ENCODE measurements at regions of chr11 and their contacts with region 1.

Region 1: DNA sequence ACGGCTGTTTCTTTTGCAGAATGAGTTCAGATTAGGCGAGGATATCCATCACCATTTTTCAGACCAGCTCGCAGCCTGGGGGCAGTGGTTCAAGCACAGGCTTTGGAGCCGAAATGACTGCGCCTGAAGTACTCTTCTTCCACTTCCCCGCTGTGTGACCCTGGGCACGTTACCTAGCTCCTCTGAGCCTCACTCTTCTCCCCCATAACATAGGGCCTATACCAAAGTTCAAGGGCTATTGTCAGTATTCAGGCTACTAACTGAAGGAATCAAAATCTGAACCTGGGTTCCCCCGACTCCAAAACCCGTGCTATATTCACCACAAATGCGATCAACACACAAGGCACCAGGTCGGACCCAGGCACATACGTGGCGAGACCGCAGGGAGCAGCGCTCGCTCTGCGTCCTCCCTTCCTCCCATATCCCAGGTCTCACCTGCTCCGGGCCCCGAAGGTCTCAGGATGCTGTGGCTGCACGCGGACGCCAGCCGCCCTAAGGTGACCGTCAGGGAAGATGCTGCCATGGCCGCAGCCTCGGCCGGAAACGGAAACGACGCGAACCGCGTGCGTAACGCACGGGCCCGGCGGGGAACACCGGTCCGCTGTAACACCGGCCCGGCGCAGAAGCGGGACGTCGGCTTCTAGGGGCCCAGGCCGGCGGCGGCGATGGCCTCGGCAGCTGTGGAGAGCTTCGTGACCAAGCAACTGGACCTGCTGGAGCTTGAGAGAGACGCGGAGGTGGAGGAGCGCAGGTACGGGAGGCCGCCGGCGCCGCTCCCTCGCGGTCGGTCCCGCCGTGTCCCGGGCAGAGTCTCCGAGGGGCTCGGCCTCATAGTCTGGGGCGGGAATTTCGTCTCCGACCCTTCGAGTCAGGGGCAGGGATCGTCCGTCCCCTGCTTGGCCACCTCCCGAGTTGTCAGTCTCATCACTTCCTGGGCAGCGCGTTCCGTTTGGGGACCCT is at the starts of genes IGHMBP2 and MRPL21:
- DNase-seq: peak; percentile 80
- ATAC-seq: peak; percentile 96
- H3K4me3 ChIP-seq: peak within 1 kb of the TSS; percentile 97
- H3K27ac ChIP-seq: peak within 1 kb of the TSS; percentile 91
- H3K4me1 ChIP-seq: peaks cover 3% of the 10 kb centered on the region; the same call in 1 of the 2 replicates
- H3K27me3 ChIP-seq: no peaks in the 10 kb centered on the region
- CTCF ChIP-seq: no peak
- POLR2A ChIP-seq: peak; percentile 71
- RAD21 ChIP-seq: peak; percentile 28; the same call in 1 of the 2 replicates
- total RNA-seq, gene IGHMBP2: 3.9 and 4.5 TPM in 2 replicates
- total RNA-seq, gene MRPL21: 19.2 and 21.7 TPM in 2 replicates

Region 2: DNA sequence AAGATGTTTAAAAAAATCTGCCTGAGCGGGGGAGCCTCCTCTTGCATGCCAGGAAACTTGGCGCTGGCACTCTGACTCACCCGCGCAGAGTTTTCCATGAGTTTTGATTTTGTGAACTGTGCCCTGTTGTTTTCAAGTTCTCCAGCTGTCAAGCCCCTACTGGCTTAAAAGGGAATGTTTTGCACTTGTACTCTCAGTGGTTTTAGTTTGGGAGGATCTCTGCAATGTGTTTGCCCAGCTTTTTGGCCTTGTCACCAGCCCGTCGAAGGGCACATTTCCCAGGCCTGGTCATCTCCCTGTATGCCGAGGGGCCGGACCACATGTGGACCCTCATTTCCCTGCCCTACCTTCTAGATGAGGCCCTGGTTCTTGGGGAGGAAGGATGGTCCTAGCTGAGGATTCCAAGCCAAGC is 97.3 kb after region 1 on chr11:
- CTCF ChIA-PET with region 1: no interaction called
- POLR2A ChIA-PET with region 1: no interaction called
- dilution Hi-C with region 1: no loop called
- in situ Hi-C with region 1: no loop called
- intact Hi-C with region 1: loop called (anchors 5 kb)
- DNase-seq: peak; percentile 87
- ATAC-seq: peak; percentile 73
- H3K4me3 ChIP-seq: no peak overlapping the region
- H3K27ac ChIP-seq: peak overlapping the region; percentile 53; the same call in 1 of the 2 replicates
- H3K4me1 ChIP-seq: peaks cover 26% of the 10 kb centered on the region
- H3K27me3 ChIP-seq: no peaks in the 10 kb centered on the region
- CTCF ChIP-seq: peak; percentile 66
- POLR2A ChIP-seq: no peak
- RAD21 ChIP-seq: peak; percentile 62

Region 3: GRCh38 chr11:69048718-69049489 is 145.3 kb after region 1 on chr11 and contains the start of gene TPCN2:
- CTCF ChIA-PET with region 1: interaction called, 3 read pairs
- POLR2A ChIA-PET with region 1: no interaction called
- dilution Hi-C with region 1: no loop called
- in situ Hi-C with region 1: no loop called
- intact Hi-C with region 1: loop called (anchors 1 kb)
- DNase-seq: peak; percentile 96
- ATAC-seq: peak; percentile 96
- H3K4me3 ChIP-seq: peak within 1 kb of the TSS; percentile 60
- H3K27ac ChIP-seq: peak within 1 kb of the TSS; percentile 53
- H3K4me1 ChIP-seq: peaks cover 13% of the 10 kb centered on the region
- H3K27me3 ChIP-seq: no peaks in the 10 kb centered on the region
- CTCF ChIP-seq: no peak
- POLR2A ChIP-seq: peak; percentile 80
- RAD21 ChIP-seq: no peak
- total RNA-seq, gene TPCN2: 3.1 and 3.4 TPM in 2 replicates

Region 4: DNA sequence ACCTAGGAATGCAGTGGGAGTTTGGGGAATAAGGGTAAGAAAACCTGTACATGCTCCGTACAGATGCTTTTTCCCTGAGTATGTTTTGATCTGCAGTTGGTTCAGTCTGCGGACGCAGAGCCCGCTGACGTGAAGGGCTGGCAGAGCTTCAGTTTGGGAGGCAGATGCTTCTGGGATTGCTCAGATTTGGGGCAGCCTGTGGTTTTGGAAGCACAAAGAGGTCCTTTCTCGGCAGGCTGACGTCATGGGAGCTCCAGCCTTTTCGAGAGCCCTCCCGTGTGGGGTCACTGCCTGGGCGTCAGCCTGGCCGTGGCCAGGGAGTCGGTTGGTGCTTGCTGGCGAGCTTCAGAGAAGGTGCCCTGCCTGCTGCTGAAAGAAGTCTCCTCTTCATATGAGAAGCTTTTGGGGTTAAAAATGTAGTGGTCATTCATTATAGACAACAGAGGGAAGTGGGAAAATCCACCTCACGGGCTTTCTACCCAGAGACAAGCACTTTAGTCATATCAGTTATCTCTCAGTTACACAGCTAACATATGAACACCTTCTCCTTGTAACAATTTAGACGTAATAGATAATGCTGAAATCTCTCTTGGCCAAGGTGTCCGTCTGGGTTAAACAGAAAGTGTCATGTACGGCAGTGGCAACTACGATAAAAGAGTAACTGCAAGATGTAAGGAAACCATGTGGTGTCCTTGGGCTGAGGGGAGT is 172.0 kb after region 1 on chr11:
- CTCF ChIA-PET with region 1: no interaction called
- POLR2A ChIA-PET with region 1: no interaction called
- dilution Hi-C with region 1: no loop called
- in situ Hi-C with region 1: loop called (anchors 5 kb)
- intact Hi-C with region 1: no loop called
- DNase-seq: peak; percentile 99
- ATAC-seq: peak; percentile 94
- H3K4me3 ChIP-seq: no peak overlapping the region
- H3K27ac ChIP-seq: peak overlapping the region; percentile 15
- H3K4me1 ChIP-seq: peaks cover 21% of the 10 kb centered on the region
- H3K27me3 ChIP-seq: no peaks in the 10 kb centered on the region
- CTCF ChIP-seq: no peak
- POLR2A ChIP-seq: peak; percentile 52
- RAD21 ChIP-seq: no peak

Region 5: DNA sequence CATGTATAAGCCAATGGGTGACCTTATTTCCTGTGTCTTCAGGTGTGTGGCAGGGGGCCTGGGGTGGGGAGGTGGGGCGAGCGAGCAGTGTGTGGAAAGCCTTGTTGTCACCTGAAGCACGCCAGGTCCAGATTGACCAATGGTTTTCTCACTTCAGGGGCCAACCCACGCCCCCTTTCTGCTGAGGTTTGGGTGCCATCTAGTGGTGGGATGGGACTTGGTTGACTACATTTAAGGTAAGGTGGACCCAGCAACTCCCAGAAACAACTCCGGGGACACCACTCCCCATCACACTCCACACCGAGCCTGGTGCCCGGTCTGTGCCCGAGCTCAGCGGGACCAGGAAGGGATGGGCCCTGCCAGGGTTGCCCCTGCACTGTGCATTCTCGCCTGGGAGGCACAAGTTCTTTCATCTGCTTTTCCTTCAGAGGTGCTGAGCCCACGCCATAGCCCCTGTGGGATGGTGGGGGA is 185.1 kb after region 1 on chr11:
- CTCF ChIA-PET with region 1: no interaction called
- POLR2A ChIA-PET with region 1: no interaction called
- dilution Hi-C with region 1: no loop called
- in situ Hi-C with region 1: loop called (anchors 5 kb)
- intact Hi-C with region 1: loop called (anchors 5 kb)
- DNase-seq: peak; percentile 76
- ATAC-seq: peak; percentile 83
- H3K4me3 ChIP-seq: no peak overlapping the region
- H3K27ac ChIP-seq: no peak overlapping the region
- H3K4me1 ChIP-seq: peaks cover 9% of the 10 kb centered on the region
- H3K27me3 ChIP-seq: no peaks in the 10 kb centered on the region
- CTCF ChIP-seq: peak; percentile 86
- POLR2A ChIP-seq: no peak
- RAD21 ChIP-seq: peak; percentile 91

Measured in IMR-90 (cell line).